Prostate gland (tissue), 2 donors: ENCODE measurements at regions of chr1 and their contacts with region 1.

Region 1: GRCh38 chr1:30727824-30728223 is 4.4 kb upstream of the MATN1 start:
- DNase-seq: no peak
- H3K4me3 ChIP-seq: no peak overlapping the region
- H3K27ac ChIP-seq: no peak overlapping the region
- H3K4me1 ChIP-seq: no peaks in the 10 kb centered on the region
- H3K27me3 ChIP-seq: no peaks in the 10 kb centered on the region
- CTCF ChIP-seq: no peak
- POLR2A ChIP-seq: no peak

Region 2: DNA sequence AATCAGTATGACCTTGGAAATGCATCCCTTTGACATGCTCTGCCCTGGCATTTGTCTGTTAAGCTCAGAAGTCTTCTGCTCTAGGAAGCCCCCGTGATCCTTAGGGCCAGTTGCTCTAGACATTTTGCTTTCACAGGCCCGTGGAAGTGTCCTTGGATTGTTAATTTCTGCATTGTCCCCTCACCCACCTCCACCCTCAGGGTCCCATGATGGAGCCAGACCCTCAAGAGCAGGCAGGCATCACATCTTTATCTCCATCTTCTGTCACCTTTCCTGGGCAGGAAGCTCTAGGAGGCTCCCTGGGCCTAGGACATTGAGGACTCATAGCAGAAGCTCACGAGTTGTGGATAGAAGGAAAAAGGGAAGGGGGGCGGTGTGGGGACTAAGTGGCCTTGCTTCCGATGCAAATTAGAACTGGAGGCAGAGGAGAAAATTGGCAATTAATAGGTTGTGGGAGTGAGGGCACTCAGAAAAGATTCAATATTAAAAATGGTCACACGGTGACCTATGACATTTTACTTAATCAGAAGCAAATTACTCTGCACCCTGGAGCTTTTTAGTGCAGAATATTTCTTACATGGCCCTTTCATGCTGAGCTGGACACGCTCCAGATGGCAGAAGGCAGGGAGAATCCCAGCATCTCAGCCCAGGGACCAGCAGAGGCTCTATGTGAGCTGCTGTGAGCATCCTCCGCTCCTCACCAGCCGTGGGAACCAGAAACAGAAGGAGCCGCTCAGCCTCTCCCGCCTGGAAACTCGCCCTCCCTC is 189.4 kb before region 1 on chr1:
- intact Hi-C with region 1: no loop called
- DNase-seq: no peak
- H3K4me3 ChIP-seq: no peak overlapping the region
- H3K27ac ChIP-seq: no peak overlapping the region
- H3K4me1 ChIP-seq: no peaks in the 10 kb centered on the region
- H3K27me3 ChIP-seq: no peaks in the 10 kb centered on the region
- CTCF ChIP-seq: no peak
- POLR2A ChIP-seq: no peak

Region 3: DNA sequence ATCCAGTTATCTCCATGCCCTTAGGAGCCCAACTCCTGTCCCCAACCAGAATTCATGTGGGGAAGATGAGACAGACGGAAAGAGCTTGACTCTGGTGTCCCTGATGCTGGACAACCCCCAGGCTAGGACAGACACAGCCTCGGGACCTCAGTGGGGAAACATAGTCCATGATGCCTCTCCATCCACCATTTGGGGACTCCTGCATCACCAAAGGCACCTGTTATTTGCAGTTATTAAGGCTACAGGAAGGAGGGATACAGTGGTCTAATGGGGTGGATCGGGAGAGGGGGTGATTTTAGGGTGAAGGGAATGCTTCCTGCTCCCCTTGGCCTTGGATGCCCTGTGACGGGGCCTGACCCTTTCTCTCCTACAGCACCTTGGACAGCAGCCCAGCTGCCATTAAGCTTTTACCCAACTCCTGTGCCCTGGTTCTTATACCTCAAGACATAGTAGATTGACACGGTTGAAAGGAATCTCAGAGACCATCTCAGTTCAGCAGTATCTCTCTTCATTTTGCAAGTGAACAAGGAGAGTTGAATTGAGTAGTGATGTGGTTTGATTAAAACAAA is 116.0 kb before region 1 on chr1:
- intact Hi-C with region 1: no loop called
- DNase-seq: no peak
- H3K4me3 ChIP-seq: no peak overlapping the region
- H3K27ac ChIP-seq: no peak overlapping the region
- H3K4me1 ChIP-seq: no peaks in the 10 kb centered on the region
- H3K27me3 ChIP-seq: no peaks in the 10 kb centered on the region
- CTCF ChIP-seq: no peak
- POLR2A ChIP-seq: no peak

Region 4: GRCh38 chr1:30763651-30764248 is 35.9 kb after region 1 on chr1:
- intact Hi-C with region 1: loop called (anchors 5 kb)
- DNase-seq: peak; percentile 44
- H3K4me3 ChIP-seq: no peak overlapping the region
- H3K27ac ChIP-seq: no peak overlapping the region
- H3K4me1 ChIP-seq: no peaks in the 10 kb centered on the region
- H3K27me3 ChIP-seq: no peaks in the 10 kb centered on the region
- CTCF ChIP-seq: no peak
- POLR2A ChIP-seq: no peak